ENCODE measurements at regions of chr11 and their contacts with region 1.

Region 1: DNA sequence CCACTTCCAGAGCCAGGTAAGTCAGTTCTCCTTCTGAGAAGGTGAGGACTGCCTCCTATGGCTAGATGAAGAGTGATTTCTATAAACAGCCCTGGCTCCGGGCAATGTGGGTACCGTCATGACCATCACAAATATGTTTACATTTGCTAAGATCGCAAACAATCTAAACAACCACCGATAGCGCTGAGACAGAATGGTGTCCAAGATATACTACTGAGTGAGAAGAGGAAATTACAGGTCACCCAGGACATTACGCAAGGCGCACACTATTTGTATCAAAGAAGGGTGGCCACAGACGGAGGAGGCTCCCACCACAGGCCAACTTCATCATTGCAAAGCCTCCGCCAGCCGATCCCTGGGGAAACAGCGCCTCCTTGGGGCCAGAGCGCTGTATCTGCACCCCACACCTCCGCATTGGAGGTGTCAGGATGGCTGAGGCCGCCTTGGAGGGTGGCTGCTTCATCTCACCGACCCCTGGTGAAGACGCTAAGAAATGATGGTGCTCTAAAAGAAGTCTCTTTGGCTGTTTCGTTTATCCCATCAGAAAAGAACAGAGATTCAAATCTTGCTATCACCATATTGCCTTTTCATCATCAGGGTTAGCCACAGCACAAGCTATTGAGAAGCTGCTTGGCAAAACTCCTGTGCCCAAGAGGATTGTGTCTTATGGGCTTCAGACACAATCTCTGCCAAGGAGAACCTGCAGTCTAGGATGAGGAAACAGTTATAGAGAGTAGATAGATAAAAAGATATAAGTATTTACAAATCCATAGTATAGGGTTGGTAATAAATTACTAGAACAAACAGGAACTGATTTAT is 12.3 kb upstream of the ASRGL1 start:
- DNase-seq: peak; percentile 88
- H3K4me3 Mint-ChIP-seq: no peak overlapping the region
- H3K27ac Mint-ChIP-seq: no peak overlapping the region
- H3K4me1 Mint-ChIP-seq: no peaks in the 10 kb centered on the region
- H3K27me3 Mint-ChIP-seq: peaks cover 2% of the 10 kb centered on the region

Region 2: GRCh38 chr11:62169091-62169847 is 155.7 kb before region 1 on chr11:
- CTCF ChIA-PET with region 1: interaction called, 14 read pairs
- intact Hi-C with region 1: loop called (anchors 1 kb)
- DNase-seq: no peak
- H3K4me3 Mint-ChIP-seq: no peak overlapping the region
- H3K27ac Mint-ChIP-seq: no peak overlapping the region
- H3K4me1 Mint-ChIP-seq: peaks cover 4% of the 10 kb centered on the region
- H3K27me3 Mint-ChIP-seq: peaks cover 19% of the 10 kb centered on the region

Region 3: DNA sequence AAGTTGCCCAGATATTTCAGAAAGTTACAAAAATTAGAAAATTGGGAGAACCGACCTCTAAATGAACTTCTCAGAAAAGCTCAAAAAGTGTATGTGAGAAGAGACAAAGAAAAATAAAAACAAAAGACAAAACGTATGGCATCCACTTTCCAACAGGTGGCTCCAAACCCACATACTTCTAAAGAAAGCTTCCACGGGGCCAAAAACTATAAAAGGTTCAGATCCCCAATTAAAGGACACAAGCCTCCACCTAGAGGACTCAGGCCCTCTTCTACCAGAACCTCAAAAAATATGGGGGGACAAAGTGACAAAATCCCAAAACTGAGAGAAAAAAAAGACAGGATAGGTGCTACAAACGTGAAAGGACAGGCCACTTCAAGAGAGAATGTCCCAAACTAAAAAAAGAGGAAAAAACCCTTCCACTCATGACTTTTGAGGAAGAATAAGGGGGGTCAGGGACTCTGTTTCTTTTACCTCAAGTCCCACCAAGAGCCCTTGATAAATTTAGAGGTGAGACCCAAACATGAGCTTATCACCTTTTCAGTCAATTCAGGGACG is 107.7 kb before region 1 on chr11:
- CTCF ChIA-PET with region 1: no interaction called
- intact Hi-C with region 1: loop called (anchors 1 kb)
- DNase-seq: peak; percentile 15
- H3K4me3 Mint-ChIP-seq: no peak overlapping the region
- H3K27ac Mint-ChIP-seq: no peak overlapping the region
- H3K4me1 Mint-ChIP-seq: no peaks in the 10 kb centered on the region
- H3K27me3 Mint-ChIP-seq: peaks cover 6% of the 10 kb centered on the region

Region 4: DNA sequence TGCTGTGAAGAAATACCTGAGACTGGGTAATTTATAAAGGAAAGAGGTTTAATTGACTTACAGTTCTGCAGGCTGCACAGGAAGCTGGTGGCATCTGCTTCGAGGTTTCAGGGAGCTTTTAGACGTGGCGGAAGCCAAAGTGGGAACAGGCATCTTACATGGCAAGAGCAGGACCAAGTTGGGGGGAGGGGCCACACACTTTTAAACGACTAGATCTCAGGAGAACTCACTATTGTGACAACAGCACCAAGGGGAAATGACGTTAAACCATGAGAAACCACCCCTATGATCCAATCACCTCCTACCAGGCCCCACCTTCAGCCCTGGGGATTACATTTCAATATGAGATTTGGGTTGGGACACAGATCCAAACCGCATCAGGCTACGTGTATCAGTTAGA is 15.0 kb before region 1 on chr11:
- CTCF ChIA-PET with region 1: interaction called, 22 read pairs
- intact Hi-C with region 1: no loop called
- DNase-seq: no peak
- H3K4me3 Mint-ChIP-seq: no peak overlapping the region
- H3K27ac Mint-ChIP-seq: no peak overlapping the region
- H3K4me1 Mint-ChIP-seq: peaks cover 13% of the 10 kb centered on the region
- H3K27me3 Mint-ChIP-seq: peaks cover 18% of the 10 kb centered on the region

Region 5: GRCh38 chr11:62353844-62354243 is 28.9 kb after region 1 on chr11:
- CTCF ChIA-PET with region 1: no interaction called
- intact Hi-C with region 1: no loop called
- DNase-seq: no peak
- H3K4me3 Mint-ChIP-seq: no peak overlapping the region
- H3K27ac Mint-ChIP-seq: no peak overlapping the region
- H3K4me1 Mint-ChIP-seq: peaks cover 9% of the 10 kb centered on the region
- H3K27me3 Mint-ChIP-seq: no peaks in the 10 kb centered on the region

Region 6: GRCh38 chr11:62645956-62646824 is 321.2 kb after region 1 on chr11 and contains the start of gene GANAB:
- CTCF ChIA-PET with region 1: no interaction called
- intact Hi-C with region 1: no loop called
- DNase-seq: peak; percentile 100
- H3K4me3 Mint-ChIP-seq: peak within 1 kb of the TSS; percentile 99
- H3K27ac Mint-ChIP-seq: peak within 1 kb of the TSS; percentile 95
- H3K4me1 Mint-ChIP-seq: peaks cover 35% of the 10 kb centered on the region
- H3K27me3 Mint-ChIP-seq: no peaks in the 10 kb centered on the region
- total RNA-seq, gene GANAB: 221 to 230 TPM

Measured in activated naive CD4-positive, alpha-beta T cell treated with anti-CD3 and anti-CD28 coated beads for 36 hours (primary cell).